ENCODE measurements at regions of chr6 and their contacts with region 1.

Region 1: GRCh38 chr6:49570474-49571079 is 20.1 kb downstream of the C6orf141 start:
- DNase-seq: peak; percentile 67
- H3K4me3 ChIP-seq: no peak overlapping the region
- H3K27ac ChIP-seq: peak overlapping the region; percentile 55
- H3K4me1 ChIP-seq: peaks cover 36% of the 10 kb centered on the region
- H3K27me3 ChIP-seq: no peaks in the 10 kb centered on the region
- CTCF ChIP-seq: peak; percentile 20 to 25
- POLR2A ChIP-seq: no peak

Region 2: GRCh38 chr6:49541210-49541724 is 29.3 kb before region 1 on chr6:
- CTCF ChIA-PET with region 1: interaction called, 9 read pairs
- POLR2A ChIA-PET with region 1: no interaction called
- dilution Hi-C with region 1: no loop called
- intact Hi-C with region 1: loop called (anchors 1 kb)
- DNase-seq: peak; percentile 67
- H3K4me3 ChIP-seq: no peak overlapping the region
- H3K27ac ChIP-seq: peak overlapping the region; percentile 41
- H3K4me1 ChIP-seq: peaks cover 14% of the 10 kb centered on the region
- H3K27me3 ChIP-seq: no peaks in the 10 kb centered on the region
- CTCF ChIP-seq: no peak
- POLR2A ChIP-seq: no peak

Region 3: GRCh38 chr6:49550492-49551077 is 20.0 kb before region 1 on chr6 and contains the start of gene C6orf141:
- CTCF ChIA-PET with region 1: interaction called, 43 read pairs
- POLR2A ChIA-PET with region 1: interaction called, 3 read pairs
- dilution Hi-C with region 1: no loop called
- intact Hi-C with region 1: loop called (anchors 1 kb)
- DNase-seq: peak; percentile 24
- H3K4me3 ChIP-seq: peak within 1 kb of the TSS; percentile 51 to 71 (median 59)
- H3K27ac ChIP-seq: peak within 1 kb of the TSS; percentile 11
- H3K4me1 ChIP-seq: peaks cover 24% of the 10 kb centered on the region
- H3K27me3 ChIP-seq: peaks cover 0 to 3% of the 10 kb centered on the region in 2 experiments
- CTCF ChIP-seq: no peak
- POLR2A ChIP-seq: no peak
- total RNA-seq, gene C6orf141: 13.7 and 15.5 TPM in 2 replicates

Region 4: GRCh38 chr6:49556429-49556841 is 14.1 kb before region 1 on chr6:
- CTCF ChIA-PET with region 1: interaction called, 43 read pairs
- POLR2A ChIA-PET with region 1: interaction called, 3 read pairs
- dilution Hi-C with region 1: no loop called
- intact Hi-C with region 1: loop called (anchors 1 kb)
- DNase-seq: peak; percentile 95
- H3K4me3 ChIP-seq: no peak overlapping the region
- H3K27ac ChIP-seq: peak overlapping the region; percentile 76
- H3K4me1 ChIP-seq: peaks cover 28% of the 10 kb centered on the region
- H3K27me3 ChIP-seq: no peaks in the 10 kb centered on the region
- CTCF ChIP-seq: no peak
- POLR2A ChIP-seq: no peak

Region 5: GRCh38 chr6:49634092-49634840 is 63.7 kb after region 1 on chr6:
- CTCF ChIA-PET with region 1: no interaction called
- POLR2A ChIA-PET with region 1: no interaction called
- dilution Hi-C with region 1: no loop called
- intact Hi-C with region 1: no loop called
- DNase-seq: no peak
- H3K4me3 ChIP-seq: no peak overlapping the region
- H3K27ac ChIP-seq: no peak overlapping the region
- H3K4me1 ChIP-seq: no peaks in the 10 kb centered on the region
- H3K27me3 ChIP-seq: peaks cover 0 to 2% of the 10 kb centered on the region in 2 experiments
- CTCF ChIP-seq: no peak
- POLR2A ChIP-seq: no peak

Region 6: DNA sequence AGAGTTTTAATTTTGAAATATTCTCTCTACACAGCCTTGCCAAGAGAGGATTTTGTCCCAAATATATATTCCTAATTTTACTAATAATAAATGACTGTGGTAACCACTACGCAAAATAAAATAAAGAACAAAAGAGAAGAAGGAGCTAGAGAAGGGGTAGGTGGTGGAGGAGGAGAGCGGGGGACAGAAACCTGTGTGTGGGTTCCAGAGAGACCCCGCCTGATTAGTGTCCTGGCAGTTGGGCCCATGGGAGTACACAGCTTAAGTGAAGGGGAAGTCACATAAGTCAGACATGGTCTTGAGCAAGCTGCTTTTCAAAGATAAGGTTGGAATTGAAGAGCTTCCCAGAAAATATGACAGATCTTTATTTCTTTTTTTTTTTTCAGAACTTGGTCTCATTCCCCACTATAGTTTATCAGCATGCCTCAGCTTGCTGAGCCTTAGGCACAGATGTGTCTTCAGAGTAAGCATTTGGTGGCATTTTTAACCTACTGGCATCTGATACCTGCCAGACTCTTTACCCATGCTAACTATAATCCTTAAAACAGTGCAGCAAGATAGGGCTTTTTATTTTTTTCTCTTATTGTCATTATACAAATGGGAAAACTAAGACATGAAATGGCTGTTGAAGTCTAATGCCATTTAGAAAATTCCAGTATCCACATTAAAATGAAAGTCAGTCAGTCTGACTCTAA is 75.7 kb after region 1 on chr6:
- CTCF ChIA-PET with region 1: no interaction called
- POLR2A ChIA-PET with region 1: no interaction called
- dilution Hi-C with region 1: no loop called
- intact Hi-C with region 1: no loop called
- DNase-seq: no peak
- H3K4me3 ChIP-seq: no peak overlapping the region
- H3K27ac ChIP-seq: no peak overlapping the region
- H3K4me1 ChIP-seq: no peaks in the 10 kb centered on the region
- H3K27me3 ChIP-seq: peaks cover 0 to 2% of the 10 kb centered on the region in 2 experiments
- CTCF ChIP-seq: no peak
- POLR2A ChIP-seq: no peak

Region 7: DNA sequence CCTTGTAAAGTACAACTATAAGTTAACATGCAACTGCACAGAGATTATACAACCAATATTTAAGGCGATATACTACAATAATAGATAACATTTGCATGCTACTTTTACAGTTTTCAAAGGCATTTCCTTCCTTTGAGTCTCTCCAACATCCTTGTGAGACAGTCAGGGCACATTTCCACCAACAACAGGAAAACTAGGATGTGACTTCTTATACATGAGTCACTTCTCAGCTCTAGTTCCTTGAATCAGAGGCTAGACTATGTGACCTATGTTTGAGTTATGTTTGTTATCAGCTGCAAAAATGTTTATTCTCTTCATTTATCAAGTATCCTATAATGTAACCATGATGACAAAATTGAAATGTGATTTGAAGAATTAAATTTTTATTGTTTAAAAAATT is 1091.1 kb after region 1 on chr6:
- CTCF ChIA-PET with region 1: no interaction called
- POLR2A ChIA-PET with region 1: no interaction called
- dilution Hi-C with region 1: no loop called
- intact Hi-C with region 1: loop called (anchors 2 kb)
- DNase-seq: peak; percentile 86
- H3K4me3 ChIP-seq: peak overlapping the region in 1 of 3 experiments; percentile 37
- H3K27ac ChIP-seq: peak overlapping the region; percentile 92
- H3K4me1 ChIP-seq: peaks cover 61% of the 10 kb centered on the region
- H3K27me3 ChIP-seq: no peaks in the 10 kb centered on the region
- CTCF ChIP-seq: no peak
- POLR2A ChIP-seq: no peak

Measured in endothelial cell of umbilical vein (primary cell).